Activated naive CD4-positive, alpha-beta T cell treated with anti-CD3 and anti-CD28 coated beads for 36 hours (primary cell): ENCODE measurements at regions of chr3 and their contacts with region 1.

Region 1: DNA sequence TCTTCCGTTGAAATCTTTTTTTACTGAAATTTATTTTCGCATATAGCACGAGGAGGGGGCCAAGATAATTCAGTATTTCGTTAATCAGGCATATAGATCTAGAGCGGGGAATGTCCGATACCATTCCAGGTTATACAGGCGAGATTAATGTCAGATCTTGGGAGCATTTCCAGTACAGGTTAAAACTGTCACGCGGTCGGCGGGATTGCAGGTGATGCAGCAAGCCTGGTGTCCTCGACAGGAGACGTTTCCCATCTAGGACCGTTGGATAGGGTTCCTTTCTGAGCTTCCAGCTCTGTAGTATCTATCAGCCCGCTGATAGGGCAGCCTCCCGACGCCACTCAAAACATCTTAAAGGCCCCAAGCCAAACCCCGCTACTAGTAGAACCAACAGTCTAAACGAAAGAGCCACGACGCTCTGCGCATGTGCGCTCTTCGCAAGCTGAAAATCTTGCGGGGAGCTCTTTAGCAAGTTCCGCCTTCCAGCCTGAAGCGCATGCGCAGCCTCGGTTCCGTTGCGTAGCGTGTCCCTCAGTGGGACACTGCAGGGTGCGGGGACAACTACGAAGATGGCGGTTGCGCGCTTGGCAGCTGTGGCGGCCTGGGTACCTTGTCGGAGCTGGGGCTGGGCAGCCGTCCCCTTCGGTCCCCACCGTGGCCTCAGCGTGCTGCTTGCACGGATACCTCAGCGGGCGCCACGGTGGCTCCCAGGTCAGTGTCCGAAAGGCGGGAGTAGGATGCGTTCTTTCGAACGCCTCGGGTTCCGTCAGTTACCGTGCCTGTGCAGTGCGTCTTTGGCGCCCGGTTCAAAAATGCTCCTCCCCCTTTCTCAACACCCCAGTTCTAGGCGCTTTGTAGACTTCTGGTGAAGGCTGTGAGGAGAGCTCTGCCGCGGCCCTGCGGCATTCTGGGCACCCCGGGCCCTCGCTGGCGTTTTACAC is at the start of gene ABHD10:
- DNase-seq: peak; percentile 98
- H3K4me3 Mint-ChIP-seq: peak within 1 kb of the TSS; percentile 87
- H3K27ac Mint-ChIP-seq: peak within 1 kb of the TSS; percentile 89
- H3K4me1 Mint-ChIP-seq: peaks cover 38% of the 10 kb centered on the region
- H3K27me3 Mint-ChIP-seq: no peaks in the 10 kb centered on the region
- total RNA-seq, gene ABHD10: 53.1 to 54.6 TPM

Region 2: GRCh38 chr3:111071257-111072015 is 907.3 kb before region 1 on chr3 and contains the start of gene NECTIN3:
- CTCF ChIA-PET with region 1: no interaction called
- intact Hi-C with region 1: loop called (anchors 5 kb)
- DNase-seq: peak; percentile 91
- H3K4me3 Mint-ChIP-seq: peak within 1 kb of the TSS; percentile 85
- H3K27ac Mint-ChIP-seq: peak within 1 kb of the TSS; percentile 27
- H3K4me1 Mint-ChIP-seq: peaks cover 24% of the 10 kb centered on the region
- H3K27me3 Mint-ChIP-seq: peaks cover 40% of the 10 kb centered on the region
- total RNA-seq, gene NECTIN3: 3.0 to 3.5 TPM

Region 3: DNA sequence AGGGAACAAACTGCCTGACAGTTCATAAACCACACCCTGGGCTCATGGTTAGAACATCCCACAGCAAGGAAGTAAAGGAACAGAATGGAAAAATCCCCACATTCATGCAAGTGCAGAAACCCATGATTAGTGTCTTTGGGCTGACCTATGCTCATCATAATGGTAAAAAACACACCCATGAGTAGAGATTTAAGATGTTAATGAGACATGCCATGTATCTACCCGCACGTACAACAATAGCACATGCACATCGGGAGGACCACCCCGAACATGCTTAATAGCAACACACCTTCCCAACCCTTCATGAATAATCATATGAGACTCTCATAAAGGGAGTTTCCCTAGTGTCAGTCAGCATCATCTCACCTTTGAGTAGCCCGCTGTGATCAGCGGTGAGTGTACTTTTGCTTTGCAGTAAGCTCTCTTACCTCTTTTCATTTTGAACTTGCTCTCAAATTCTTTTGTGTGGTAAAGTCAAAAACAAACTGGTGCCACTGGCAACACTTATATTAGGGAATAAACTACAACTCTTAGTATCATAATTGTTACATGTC is 406.8 kb before region 1 on chr3:
- CTCF ChIA-PET with region 1: no interaction called
- intact Hi-C with region 1: loop called (anchors 5 kb)
- DNase-seq: peak; percentile 78
- H3K4me3 Mint-ChIP-seq: no peak overlapping the region
- H3K27ac Mint-ChIP-seq: peak overlapping the region; percentile 76
- H3K4me1 Mint-ChIP-seq: peaks cover 67% of the 10 kb centered on the region
- H3K27me3 Mint-ChIP-seq: no peaks in the 10 kb centered on the region

Region 4: GRCh38 chr3:111859974-111860859 is 118.5 kb before region 1 on chr3:
- CTCF ChIA-PET with region 1: no interaction called
- intact Hi-C with region 1: loop called (anchors 1 kb)
- DNase-seq: peak; percentile 75
- H3K4me3 Mint-ChIP-seq: peak overlapping the region; percentile 84
- H3K27ac Mint-ChIP-seq: no peak overlapping the region
- H3K4me1 Mint-ChIP-seq: peaks cover 10% of the 10 kb centered on the region
- H3K27me3 Mint-ChIP-seq: peaks cover 45% of the 10 kb centered on the region

Region 5: GRCh38 chr3:111989061-111989678 is 10.4 kb after region 1 on chr3:
- CTCF ChIA-PET with region 1: interaction called, 14 read pairs
- intact Hi-C with region 1: no loop called
- DNase-seq: no peak
- H3K4me3 Mint-ChIP-seq: no peak overlapping the region
- H3K27ac Mint-ChIP-seq: no peak overlapping the region
- H3K4me1 Mint-ChIP-seq: peaks cover 27% of the 10 kb centered on the region
- H3K27me3 Mint-ChIP-seq: no peaks in the 10 kb centered on the region

Region 6: DNA sequence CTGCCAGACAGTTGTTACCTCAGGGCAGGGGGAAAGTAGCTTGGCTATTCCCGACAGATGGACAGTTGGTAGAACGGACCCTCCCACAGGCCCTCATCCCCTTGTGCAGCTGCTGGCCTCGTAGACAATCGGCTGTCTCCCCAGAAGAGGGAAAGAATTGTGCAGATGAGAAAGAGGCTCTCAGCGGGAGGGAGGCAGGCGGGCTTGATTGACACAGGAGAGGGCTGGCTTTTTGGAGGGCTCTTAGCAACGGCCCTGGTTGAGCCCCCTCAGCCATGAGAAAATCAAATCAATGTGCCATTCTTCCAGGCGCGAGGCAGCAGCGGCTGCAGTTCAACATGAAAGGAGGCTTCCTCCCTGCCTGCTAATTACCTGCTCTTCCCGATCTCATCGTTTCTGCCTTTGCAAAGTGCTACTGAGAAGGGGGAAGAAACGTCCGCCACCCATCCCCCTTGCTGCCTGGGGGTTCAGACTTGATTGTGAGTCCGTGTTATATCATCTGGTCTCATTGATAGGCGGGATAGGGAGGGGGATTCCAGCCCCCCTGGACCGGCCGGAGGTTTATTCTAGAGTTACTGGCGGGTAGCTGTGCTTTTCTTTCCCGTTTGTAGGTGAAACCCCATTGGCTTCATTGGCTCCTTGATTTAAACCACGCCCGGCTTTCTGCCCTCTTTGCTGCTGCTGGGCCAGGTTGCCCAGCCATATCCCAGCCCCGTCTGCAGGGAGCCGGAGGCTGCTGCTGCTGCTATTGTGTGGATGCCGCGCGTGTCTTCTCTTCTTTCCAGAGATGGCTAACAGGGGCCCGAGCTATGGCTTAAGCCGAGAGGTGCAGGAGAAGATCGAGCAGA is 20.1 kb after region 1 on chr3 and contains the start of gene TAGLN3:
- CTCF ChIA-PET with region 1: interaction called, 5 read pairs
- intact Hi-C with region 1: loop called (anchors 1 kb)
- DNase-seq: peak; percentile 20
- H3K4me3 Mint-ChIP-seq: peak within 1 kb of the TSS; percentile 64
- H3K27ac Mint-ChIP-seq: no peak within 1 kb of the TSS
- H3K4me1 Mint-ChIP-seq: peaks cover 45% of the 10 kb centered on the region
- H3K27me3 Mint-ChIP-seq: no peaks in the 10 kb centered on the region
- total RNA-seq, gene TAGLN3: 1.2 TPM